Esophagus muscularis mucosa (tissue), 4 donors: ENCODE measurements at regions of chr15 and their contacts with region 1.

Region 1: DNA sequence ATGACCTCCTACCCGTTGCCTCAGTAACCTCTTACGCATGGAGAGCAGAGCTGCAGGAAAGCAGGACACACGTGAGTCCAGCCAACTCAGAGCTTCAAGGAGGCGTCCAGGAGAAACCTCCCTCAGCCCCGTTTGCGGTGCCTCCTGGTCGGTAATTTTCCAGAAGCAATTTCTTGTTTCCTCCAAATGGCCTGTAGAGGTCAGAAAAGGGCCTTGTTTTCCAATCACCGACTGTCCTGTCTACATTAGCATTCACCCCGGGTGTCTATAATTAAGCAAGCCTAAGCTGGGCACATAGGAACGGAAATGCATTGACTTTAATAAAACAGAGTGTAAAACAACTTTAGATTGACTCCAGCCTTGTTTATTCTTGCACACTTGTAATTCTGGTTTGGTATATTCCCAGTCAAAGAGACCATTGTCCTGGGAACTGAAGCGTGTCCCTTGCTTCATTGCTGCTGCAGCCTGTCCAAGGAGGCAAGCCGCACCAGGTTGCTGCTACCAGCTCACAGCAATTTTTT is 836.2 kb downstream of the AGBL1 start:
- DNase-seq: peak; percentile 83
- H3K4me3 ChIP-seq: no peak overlapping the region
- H3K27ac ChIP-seq: no peak overlapping the region
- H3K4me1 ChIP-seq: peaks cover 3 to 22% (median 15%) of the 10 kb centered on the region in 4 donors
- H3K27me3 ChIP-seq: no peaks in the 10 kb centered on the region
- CTCF ChIP-seq: peak; percentile 43 to 62 (median 57)
- EP300 ChIP-seq: no peak
- POLR2A ChIP-seq: no peak

Region 2: DNA sequence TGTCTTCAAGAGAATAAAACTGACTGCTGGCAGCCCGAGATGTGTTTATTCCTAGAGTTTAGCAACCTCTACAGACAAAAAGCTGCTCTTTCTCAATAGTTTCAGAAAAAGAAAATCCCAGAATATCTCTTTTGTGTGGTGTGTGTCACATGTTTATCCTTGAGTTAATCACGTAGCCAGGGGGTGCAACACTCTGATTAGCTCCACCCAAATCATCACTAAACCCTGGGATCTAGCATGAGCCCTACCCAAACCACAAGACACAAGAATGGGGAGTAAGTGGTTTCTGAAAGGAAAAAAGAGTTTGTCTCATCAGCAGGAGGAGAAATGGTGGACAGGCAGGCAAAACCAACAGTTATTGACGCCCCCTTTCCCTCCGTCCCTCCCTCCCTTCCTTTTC is 914.7 kb before region 1 on chr15:
- intact Hi-C with region 1: no loop called
- DNase-seq: no peak
- H3K4me3 ChIP-seq: no peak overlapping the region
- H3K27ac ChIP-seq: no peak overlapping the region
- H3K4me1 ChIP-seq: peaks cover 0 to 16% (median 0%) of the 10 kb centered on the region in 4 donors
- H3K27me3 ChIP-seq: no peaks in the 10 kb centered on the region
- CTCF ChIP-seq: no peak
- EP300 ChIP-seq: no peak
- POLR2A ChIP-seq: no peak

Region 3: GRCh38 chr15:88246666-88247446 is 1331.0 kb after region 1 on chr15:
- intact Hi-C with region 1: loop called (anchors 5 kb)
- DNase-seq: no peak
- H3K4me3 ChIP-seq: peak overlapping the region in 1 of 4 donors; percentile 40
- H3K27ac ChIP-seq: no peak overlapping the region
- H3K4me1 ChIP-seq: peaks cover 7 to 23% (median 11%) of the 10 kb centered on the region in 4 donors
- H3K27me3 ChIP-seq: peaks cover 0 to 42% (median 0%) of the 10 kb centered on the region in 4 donors
- CTCF ChIP-seq: peak; percentile 91 to 99 (median 98)
- EP300 ChIP-seq: no peak
- POLR2A ChIP-seq: no peak